AG04449 (cell line): ENCODE measurements at regions of chr11 and their contacts with region 1.

Region 1: DNA sequence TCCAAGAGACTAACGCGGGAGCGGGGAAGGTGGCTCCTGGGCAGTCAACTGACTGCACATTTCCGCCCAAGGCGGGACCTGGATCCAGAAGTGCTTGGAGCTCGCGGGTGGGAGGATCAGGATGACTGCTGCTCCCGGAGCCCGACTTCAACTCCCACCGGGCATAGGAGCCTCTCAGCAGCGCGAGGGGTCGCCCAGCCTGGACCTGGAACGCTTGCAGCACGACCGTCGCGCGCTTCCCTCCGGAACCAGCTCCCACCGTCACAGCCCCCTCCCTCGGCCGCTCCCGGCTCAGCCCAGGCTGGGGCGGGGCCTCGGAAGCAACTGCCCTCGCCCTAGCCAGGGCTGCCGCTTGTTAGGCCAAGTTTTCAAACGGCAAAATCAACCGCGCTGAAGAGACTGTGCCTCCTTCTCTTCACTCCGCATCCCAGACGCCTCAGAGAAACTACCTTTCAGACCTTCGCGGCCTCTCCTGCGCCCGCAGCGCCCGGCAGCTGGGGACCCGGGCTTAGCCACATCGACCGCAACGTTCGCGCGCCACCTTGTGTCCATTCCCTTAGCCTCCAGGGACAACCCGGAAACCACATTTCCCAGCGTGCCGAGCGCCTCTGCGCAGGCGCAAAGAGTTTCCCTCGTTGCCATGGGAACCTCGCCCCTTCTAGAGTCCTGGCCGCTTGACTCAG is 14.0 kb downstream of the SSH3 start:
- DNase-seq: peak; percentile 53
- H3K4me3 ChIP-seq: peak overlapping the region; percentile 96
- CTCF ChIP-seq: peak; percentile 93

Region 2: DNA sequence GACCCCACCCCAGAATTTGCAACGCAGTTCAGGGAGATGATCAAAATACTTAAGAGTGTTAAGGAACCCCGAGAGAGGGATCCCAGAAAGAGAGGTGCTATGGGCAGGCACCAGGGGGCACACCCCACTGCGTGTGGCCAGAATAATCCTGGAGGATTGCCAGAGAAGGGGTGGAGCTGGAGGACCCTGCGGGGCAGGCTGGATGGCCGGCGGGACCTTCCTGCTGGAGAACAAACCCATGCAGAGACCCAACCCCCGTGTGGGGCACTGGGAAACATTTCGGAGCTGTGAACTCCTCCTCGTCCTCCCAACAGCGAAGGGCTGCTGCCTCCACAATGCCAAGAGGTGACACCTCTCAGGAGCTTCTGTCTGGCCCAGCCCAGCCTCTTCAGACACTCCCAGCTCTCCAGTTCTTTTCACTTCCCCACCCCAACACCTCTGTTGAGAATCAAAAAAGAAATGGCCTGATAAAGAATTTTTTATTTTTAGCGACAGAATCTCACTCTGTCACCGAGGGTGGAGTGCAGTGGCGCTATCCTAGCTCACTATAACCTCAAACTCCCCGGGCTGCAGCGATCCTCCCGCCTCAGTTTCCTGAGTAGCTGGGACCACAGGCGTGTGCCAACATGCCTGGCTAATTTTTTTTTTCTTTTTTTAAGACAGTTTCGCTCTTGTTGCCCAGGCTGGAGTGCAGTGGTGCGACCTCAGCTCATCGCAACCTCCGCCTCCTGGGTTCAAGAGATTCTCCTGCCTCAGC is 235.1 kb before region 1 on chr11:
- CTCF ChIA-PET with region 1: interaction called, 10 read pairs
- POLR2A ChIA-PET with region 1: no interaction called
- DNase-seq: no peak
- H3K4me3 ChIP-seq: no peak overlapping the region
- CTCF ChIP-seq: no peak

Region 3: DNA sequence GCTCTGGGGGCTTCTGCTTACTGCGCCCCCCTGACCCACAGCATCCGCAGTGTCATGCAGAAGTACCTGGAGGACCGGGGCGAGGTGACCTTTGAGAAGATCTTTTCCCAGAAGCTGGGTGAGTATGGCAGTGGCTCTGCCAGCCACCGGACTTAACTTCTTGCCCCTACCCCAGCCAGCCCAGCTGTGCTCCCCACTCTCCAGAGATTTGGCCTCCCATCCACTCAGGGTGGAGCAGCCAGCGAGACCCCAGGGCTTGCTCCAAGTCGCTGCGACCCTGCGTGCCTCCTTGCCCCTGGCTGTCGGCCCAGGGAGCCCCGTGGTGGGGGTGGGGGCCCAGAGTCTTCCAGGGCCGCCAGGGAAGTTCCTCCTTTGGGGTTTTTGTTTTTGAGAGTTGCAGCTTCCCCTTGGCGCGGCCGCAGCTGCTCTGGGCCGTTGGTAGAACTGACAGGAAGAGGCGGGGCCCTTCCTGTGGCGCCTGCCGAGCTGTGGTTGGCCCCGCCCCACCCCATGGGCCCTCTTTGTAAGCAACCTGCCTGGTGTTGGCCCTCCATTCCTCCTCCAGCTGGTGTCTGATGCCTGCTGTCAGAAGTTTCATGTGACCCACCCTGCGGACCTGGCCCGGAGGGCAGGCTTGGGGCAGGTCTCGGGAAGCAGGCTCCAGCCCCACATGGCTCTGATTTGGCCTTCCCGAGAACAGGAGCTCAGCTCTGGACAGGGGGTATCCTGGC is 40.0 kb before region 1 on chr11:
- CTCF ChIA-PET with region 1: interaction called, 295 read pairs
- POLR2A ChIA-PET with region 1: interaction called, 8 read pairs
- DNase-seq: no peak
- H3K4me3 ChIP-seq: peak overlapping the region; percentile 52
- CTCF ChIP-seq: no peak

Region 4: GRCh38 chr11:67303132-67303834 is 14.1 kb before region 1 on chr11 and contains the start of gene SSH3:
- CTCF ChIA-PET with region 1: interaction called, 20 read pairs
- POLR2A ChIA-PET with region 1: interaction called, 28 read pairs
- DNase-seq: no peak
- H3K4me3 ChIP-seq: peak within 1 kb of the TSS; percentile 86
- CTCF ChIP-seq: no peak

Region 5: GRCh38 chr11:67345920-67346799 is 28.8 kb after region 1 on chr11:
- CTCF ChIA-PET with region 1: interaction called, 82 read pairs
- POLR2A ChIA-PET with region 1: interaction called, 3 read pairs
- DNase-seq: no peak
- H3K4me3 ChIP-seq: no peak overlapping the region
- CTCF ChIP-seq: peak; percentile 70

Region 6: GRCh38 chr11:67382276-67383136 is 65.2 kb after region 1 on chr11:
- CTCF ChIA-PET with region 1: interaction called, 97 read pairs
- POLR2A ChIA-PET with region 1: no interaction called
- DNase-seq: no peak
- H3K4me3 ChIP-seq: no peak overlapping the region
- CTCF ChIP-seq: peak; percentile 94